Psoas muscle (tissue), 8 donors: ENCODE measurements at regions of chr16 and their contacts with region 1.

Region 1: GRCh38 chr16:15765880-15766279 is 90.9 kb downstream of the MYH11 start:
- DNase-seq: no peak
- ATAC-seq: peak; percentile 92 to 96 (median 94)
- H3K4me3 ChIP-seq: no peak overlapping the region
- H3K27ac ChIP-seq: no peak overlapping the region
- H3K4me1 ChIP-seq: no peaks in the 10 kb centered on the region
- H3K27me3 ChIP-seq: no peaks in the 10 kb centered on the region
- CTCF ChIP-seq: peak; percentile 72

Region 2: GRCh38 chr16:15726715-15727114 is 39.2 kb before region 1 on chr16:
- intact Hi-C with region 1: no loop called
- DNase-seq: no peak
- ATAC-seq: no peak
- H3K4me3 ChIP-seq: no peak overlapping the region
- H3K27ac ChIP-seq: no peak overlapping the region
- H3K4me1 ChIP-seq: no peaks in the 10 kb centered on the region
- H3K27me3 ChIP-seq: no peaks in the 10 kb centered on the region
- CTCF ChIP-seq: no peak

Region 3: DNA sequence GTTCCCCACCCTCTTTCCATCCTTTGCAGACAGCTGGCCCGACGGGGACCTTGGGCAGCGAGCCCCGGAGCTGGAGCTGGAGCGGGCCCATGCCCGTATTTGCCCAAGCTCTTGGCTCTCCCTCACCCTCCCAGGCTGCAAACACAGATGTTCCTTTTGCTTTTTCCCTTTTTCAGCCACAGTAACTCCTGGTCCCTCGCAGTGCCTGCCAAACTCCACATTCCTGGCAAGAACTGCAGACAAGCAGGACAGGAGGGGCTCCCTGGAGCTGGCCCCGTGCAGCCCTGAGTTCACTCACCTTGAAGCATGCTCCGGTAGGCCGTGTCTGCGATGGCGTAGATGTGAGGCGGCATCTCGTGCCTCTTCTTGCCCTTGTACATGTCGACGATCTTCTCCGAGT is 57.1 kb after region 1 on chr16:
- intact Hi-C with region 1: loop called (anchors 2 to 5 kb)
- DNase-seq: no peak
- ATAC-seq: no peak
- H3K4me3 ChIP-seq: no peak overlapping the region
- H3K27ac ChIP-seq: no peak overlapping the region
- H3K4me1 ChIP-seq: no peaks in the 10 kb centered on the region
- H3K27me3 ChIP-seq: no peaks in the 10 kb centered on the region
- CTCF ChIP-seq: no peak

Region 4: GRCh38 chr16:16127469-16128116 is 361.7 kb after region 1 on chr16:
- intact Hi-C with region 1: loop called (anchors 2 to 5 kb)
- DNase-seq: peak; percentile 59 to 75
- ATAC-seq: peak; percentile 86 to 91 (median 88)
- H3K4me3 ChIP-seq: no peak overlapping the region
- H3K27ac ChIP-seq: no peak overlapping the region
- H3K4me1 ChIP-seq: no peaks in the 10 kb centered on the region
- H3K27me3 ChIP-seq: no peaks in the 10 kb centered on the region
- CTCF ChIP-seq: peak; percentile 87

Region 5: DNA sequence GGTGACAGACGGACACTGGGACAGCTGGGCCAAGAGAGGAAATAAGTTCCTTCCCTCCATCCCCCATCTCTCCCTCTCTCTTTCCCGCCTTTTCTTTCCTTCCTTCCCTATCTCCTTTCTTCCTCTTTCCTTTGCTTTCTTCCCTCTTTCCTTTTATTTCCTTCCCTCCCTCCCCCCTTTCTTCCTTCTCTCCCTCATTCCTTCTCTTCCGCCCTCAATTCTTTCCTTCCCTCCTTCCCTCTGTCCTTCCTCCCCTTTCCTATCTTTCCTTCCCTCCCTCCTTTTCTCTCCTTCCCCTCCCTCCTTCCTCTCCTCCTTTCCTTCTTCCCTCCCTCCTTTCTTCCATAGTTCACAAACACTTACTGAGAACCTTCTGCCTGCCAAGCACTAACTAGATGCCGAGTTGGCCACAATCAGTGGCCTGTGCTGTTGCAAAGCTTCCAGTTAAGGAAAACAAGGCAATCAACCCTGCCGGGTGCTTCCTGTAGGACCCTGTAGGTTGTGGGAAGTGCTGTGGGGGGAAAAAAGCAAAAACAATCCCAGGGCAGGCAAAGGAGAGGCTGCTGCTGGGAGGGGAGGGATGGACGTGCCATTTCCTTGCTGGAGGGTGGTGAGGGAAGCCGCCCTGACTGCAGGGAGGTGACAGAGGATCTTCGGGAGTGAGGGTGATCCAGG is 425.8 kb after region 1 on chr16:
- intact Hi-C with region 1: loop called (anchors 5 to 10 kb)
- DNase-seq: no peak
- ATAC-seq: no peak
- H3K4me3 ChIP-seq: no peak overlapping the region
- H3K27ac ChIP-seq: no peak overlapping the region
- H3K4me1 ChIP-seq: peaks cover 7% of the 10 kb centered on the region
- H3K27me3 ChIP-seq: no peaks in the 10 kb centered on the region
- CTCF ChIP-seq: no peak

Region 6: GRCh38 chr16:16197847-16198365 is 432.0 kb after region 1 on chr16:
- intact Hi-C with region 1: loop called (anchors 5 to 10 kb)
- DNase-seq: no peak
- ATAC-seq: no peak
- H3K4me3 ChIP-seq: no peak overlapping the region
- H3K27ac ChIP-seq: no peak overlapping the region
- H3K4me1 ChIP-seq: peaks cover 9% of the 10 kb centered on the region
- H3K27me3 ChIP-seq: no peaks in the 10 kb centered on the region
- CTCF ChIP-seq: no peak